ENCODE measurements at regions of chr1 and their contacts with region 1.

Region 1: DNA sequence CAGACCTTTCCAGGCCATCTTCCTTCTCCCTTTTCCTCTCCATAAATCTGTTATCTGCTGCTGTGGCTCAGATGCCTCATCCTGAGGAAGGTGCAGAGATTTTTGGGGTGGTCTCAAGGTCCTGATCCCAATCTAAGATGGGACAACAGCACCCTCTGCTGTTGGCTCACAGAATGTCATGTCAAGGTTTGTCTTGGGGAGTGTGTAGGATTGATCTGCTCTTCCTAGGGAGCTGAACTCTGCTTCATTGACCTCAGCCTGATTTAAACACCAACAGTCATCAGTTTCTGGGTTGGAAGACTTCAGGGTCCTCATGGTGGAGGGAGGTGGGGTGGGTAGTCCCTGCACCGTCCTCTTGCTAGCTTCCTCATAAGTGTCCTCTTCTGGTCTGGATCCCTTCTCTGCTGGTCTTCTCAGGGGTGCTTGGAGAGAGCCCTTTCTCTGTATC is 62.8 kb upstream of the LAX1 start:
- DNase-seq: peak; percentile 52
- ATAC-seq: peak; percentile 86
- H3K4me3 ChIP-seq: no peak overlapping the region
- H3K27ac ChIP-seq: no peak overlapping the region
- H3K4me1 ChIP-seq: no peaks in the 10 kb centered on the region
- H3K27me3 ChIP-seq: no peaks in the 10 kb centered on the region
- CTCF ChIP-seq: peak; percentile 84

Region 2: DNA sequence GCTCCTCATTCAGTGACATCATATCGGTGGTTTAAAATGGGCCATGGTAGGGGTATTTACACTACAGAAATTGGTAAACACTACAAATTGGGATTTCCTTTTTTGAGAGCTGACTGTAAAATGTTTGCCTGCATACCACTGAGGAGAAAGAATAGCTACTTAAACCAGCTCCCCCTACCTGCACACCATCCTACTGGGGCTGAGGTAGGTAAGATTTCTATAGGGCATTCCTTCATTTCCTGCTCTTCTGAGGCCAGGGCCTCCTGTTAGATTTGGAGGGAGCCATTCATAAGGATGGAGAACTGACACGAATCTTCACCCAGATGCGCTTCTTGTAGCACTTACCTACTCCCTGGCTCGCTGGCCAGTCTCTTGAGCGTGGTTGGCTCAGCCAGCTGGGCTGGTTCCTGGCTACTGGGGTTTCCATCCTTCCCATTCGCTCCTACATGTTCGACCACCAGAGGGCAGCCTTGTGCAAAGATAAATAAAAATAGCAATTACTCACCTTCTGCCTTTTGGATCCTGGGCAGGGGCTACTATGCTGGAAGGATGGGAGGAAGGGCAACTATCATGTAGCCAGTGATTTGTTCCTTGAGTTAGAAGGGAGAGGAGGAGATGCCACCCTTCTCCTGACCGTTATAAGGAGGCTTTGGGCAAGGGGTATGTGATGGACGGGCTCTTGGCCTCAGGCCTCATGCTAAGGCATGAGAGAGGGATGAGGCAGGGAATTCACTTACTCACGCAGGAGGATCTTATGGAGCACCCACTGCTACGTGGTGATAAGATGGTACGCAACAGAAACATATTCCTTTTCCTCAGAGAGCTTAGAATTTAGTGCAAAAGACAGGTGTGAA is 197.5 kb before region 1 on chr1:
- CTCF ChIA-PET with region 1: interaction called, 26 read pairs
- POLR2A ChIA-PET with region 1: no interaction called
- in situ Hi-C with region 1: no loop called
- intact Hi-C with region 1: loop called (anchors 2 kb)
- DNase-seq: peak; percentile 78
- ATAC-seq: peak; percentile 86
- H3K4me3 ChIP-seq: no peak overlapping the region
- H3K27ac ChIP-seq: no peak overlapping the region
- H3K4me1 ChIP-seq: no peaks in the 10 kb centered on the region
- H3K27me3 ChIP-seq: 0 out of 2 replicates have a peak, but pooled peaks cover 2% of the 10 kb centered on the region
- CTCF ChIP-seq: peak; percentile 83

Region 3: GRCh38 chr1:203584035-203584434 is 118.1 kb before region 1 on chr1:
- CTCF ChIA-PET with region 1: no interaction called
- POLR2A ChIA-PET with region 1: no interaction called
- in situ Hi-C with region 1: no loop called
- intact Hi-C with region 1: no loop called
- DNase-seq: no peak
- ATAC-seq: no peak
- H3K4me3 ChIP-seq: no peak overlapping the region
- H3K27ac ChIP-seq: no peak overlapping the region
- H3K4me1 ChIP-seq: no peaks in the 10 kb centered on the region
- H3K27me3 ChIP-seq: peaks cover 3% of the 10 kb centered on the region; the same call in 1 of the 2 replicates
- CTCF ChIP-seq: no peak

Measured in Panc1 (cell line).